ENCODE measurements at regions of chr19 and their contacts with region 1.

Region 1: GRCh38 chr19:12139885-12140547 is at the start of gene ZNF20:
- DNase-seq: peak; percentile 95 to 97
- ATAC-seq: peak; percentile 98 to 100 (median 99)
- H3K4me3 ChIP-seq: peak within 1 kb of the TSS; percentile 57 to 97 (median 76)
- H3K27ac ChIP-seq: peak within 1 kb of the TSS; percentile 44 to 89 (median 78)
- H3K4me1 ChIP-seq: peaks cover 0 to 25% (median 20%) of the 10 kb centered on the region in 9 donors
- H3K27me3 ChIP-seq: no peaks in the 10 kb centered on the region
- CTCF ChIP-seq: peak in 1 of 9 donors; percentile 10
- total RNA-seq, gene ZNF20: 0.37 to 1.1 (median 0.95) TPM in 8 of 10 donors, not detected in the others

Region 2: GRCh38 chr19:11881151-11881800 is 258.7 kb before region 1 on chr19:
- intact Hi-C with region 1: loop called (anchors 1 to 10 kb)
- DNase-seq: peak; percentile 11 to 53
- ATAC-seq: peak; percentile 64 to 86 (median 72)
- H3K4me3 ChIP-seq: no peak overlapping the region
- H3K27ac ChIP-seq: no peak overlapping the region
- H3K4me1 ChIP-seq: peaks cover 0 to 5% (median 0%) of the 10 kb centered on the region in 9 donors
- H3K27me3 ChIP-seq: no peaks in the 10 kb centered on the region
- CTCF ChIP-seq: peak; percentile 41 to 80 (median 72)

Region 3: GRCh38 chr19:11924886-11925650 is 214.9 kb before region 1 on chr19 and contains the start of gene ZNF700:
- intact Hi-C with region 1: loop called in 4 of 10 experiments (anchors 5 kb)
- DNase-seq: peak; percentile 91 to 97
- ATAC-seq: peak; percentile 97 to 99 (median 98)
- H3K4me3 ChIP-seq: peak within 1 kb of the TSS; percentile 68 to 99 (median 91)
- H3K27ac ChIP-seq: peak within 1 kb of the TSS; percentile 84 to 98 (median 93)
- H3K4me1 ChIP-seq: peaks cover 0 to 33% (median 19%) of the 10 kb centered on the region in 9 donors
- H3K27me3 ChIP-seq: no peaks in the 10 kb centered on the region
- CTCF ChIP-seq: no peak
- total RNA-seq, gene ZNF700: 2.8 to 5.0 (median 4.4) TPM

Region 4: DNA sequence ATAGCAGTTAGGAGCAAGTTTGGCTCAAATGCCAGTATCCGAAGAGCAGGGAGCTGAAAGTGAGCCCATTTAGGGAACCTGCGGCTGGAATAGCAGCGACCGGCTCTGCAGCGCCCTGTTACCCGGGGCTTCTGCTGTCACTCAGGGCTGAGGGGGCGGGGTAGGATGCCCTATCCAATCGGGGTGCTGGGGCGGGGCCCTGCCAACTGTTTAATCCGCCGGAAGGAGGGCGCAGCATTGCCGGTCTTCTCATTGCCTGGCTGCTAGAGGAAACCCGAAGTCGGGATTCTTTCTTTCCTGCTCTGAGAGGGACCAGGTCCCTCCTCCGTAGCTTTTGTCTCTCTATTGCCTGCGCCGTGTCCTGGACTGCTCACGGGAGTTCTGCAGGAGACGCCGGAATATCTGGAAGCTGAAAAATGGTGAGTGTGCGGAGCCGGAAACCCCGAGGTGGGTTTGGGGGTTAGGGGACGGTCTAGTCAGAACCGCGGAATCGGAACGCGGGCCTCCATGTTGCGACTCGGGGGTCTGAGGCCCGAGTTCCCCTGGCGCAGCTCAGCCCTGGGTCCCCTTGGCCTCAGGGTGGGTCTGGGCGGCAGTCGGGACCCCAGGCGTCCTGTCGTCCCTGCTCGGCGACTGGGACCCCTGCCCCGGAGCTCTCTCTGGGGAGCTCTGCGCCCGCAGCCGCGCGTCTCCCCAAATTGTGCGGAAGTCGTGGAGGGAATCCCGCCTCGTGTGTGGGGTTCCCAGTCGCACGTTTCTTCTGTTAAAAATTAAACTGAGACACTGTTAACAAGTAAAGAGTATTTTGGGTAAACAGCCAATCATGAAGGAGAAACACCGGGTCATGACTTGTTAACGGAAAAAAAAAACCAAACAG is 152.4 kb before region 1 on chr19:
- intact Hi-C with region 1: loop called in 4 of 10 experiments (anchors 2 to 5 kb)
- DNase-seq: peak; percentile 96
- ATAC-seq: peak; percentile 98 to 100 (median 100)
- H3K4me3 ChIP-seq: peak overlapping the region; percentile 72 to 98 (median 84)
- H3K27ac ChIP-seq: peak overlapping the region; percentile 12 to 90 (median 87)
- H3K4me1 ChIP-seq: peaks cover 0 to 12% (median 0%) of the 10 kb centered on the region in 9 donors
- H3K27me3 ChIP-seq: no peaks in the 10 kb centered on the region
- CTCF ChIP-seq: peak in 1 of 9 donors; percentile 8

Region 5: DNA sequence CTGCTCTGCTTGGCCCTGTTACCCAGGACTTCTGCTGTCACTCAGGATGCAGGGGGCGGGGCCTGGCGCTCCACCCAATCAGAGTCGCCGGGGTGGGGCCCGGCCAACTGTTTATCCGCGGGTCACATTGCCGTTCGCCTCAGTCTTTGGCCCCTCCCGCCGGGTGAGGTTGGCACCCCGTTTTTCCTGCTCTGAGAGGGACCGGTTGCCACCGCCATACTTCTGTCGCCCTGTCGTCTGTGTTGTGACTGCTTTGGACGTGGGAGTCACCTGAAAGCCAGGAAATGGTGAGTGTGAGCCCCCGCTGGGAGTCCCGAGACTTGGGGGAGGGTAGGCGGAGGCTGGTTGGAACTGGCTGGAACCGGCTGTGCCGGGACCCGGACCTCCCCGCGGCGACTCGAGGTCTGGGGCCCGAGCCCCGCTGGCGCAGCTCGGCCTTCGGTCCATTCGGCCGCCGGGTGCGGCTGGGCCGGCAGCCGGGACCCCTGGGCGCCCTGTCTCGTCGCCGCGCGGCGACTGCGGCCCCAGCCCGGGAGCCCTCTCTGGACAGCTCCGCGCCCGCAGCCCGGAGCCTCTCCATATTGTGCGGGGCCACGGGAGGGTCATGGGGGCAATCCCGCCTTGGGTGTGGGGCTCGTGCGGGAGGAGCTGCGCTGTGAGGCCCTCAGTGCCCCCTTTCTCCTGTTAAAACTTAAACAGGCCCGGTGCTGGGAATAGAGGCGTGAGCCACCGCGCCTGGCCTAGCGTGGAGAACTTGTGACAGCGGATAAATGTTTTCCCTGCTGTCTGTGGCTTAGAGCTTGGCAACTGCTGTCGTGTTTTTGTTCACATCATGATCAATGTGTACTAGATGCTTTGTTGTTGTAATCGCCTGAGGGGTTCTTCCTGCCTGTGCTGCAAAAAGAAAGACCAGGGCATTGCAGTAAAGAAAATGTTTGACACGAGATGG is 75.2 kb before region 1 on chr19 and contains the start of gene ZNF844:
- intact Hi-C with region 1: loop called in 5 of 10 experiments (anchors 1 to 5 kb)
- DNase-seq: peak; percentile 98
- ATAC-seq: peak; percentile 99 to 100 (median 100)
- H3K4me3 ChIP-seq: peak within 1 kb of the TSS; percentile 68 to 98 (median 82)
- H3K27ac ChIP-seq: peak within 1 kb of the TSS; percentile 80 to 98 (median 96)
- H3K4me1 ChIP-seq: peaks cover 3 to 30% (median 18%) of the 10 kb centered on the region in 9 donors
- H3K27me3 ChIP-seq: no peaks in the 10 kb centered on the region
- CTCF ChIP-seq: no peak
- total RNA-seq, gene ZNF844: 11.4 to 22.5 (median 17.8) TPM

Region 6: GRCh38 chr19:12180377-12180776 is 40.4 kb after region 1 on chr19:
- intact Hi-C with region 1: no loop called
- DNase-seq: no peak
- ATAC-seq: no peak
- H3K4me3 ChIP-seq: no peak overlapping the region
- H3K27ac ChIP-seq: no peak overlapping the region
- H3K4me1 ChIP-seq: no peaks in the 10 kb centered on the region
- H3K27me3 ChIP-seq: no peaks in the 10 kb centered on the region
- CTCF ChIP-seq: no peak

Region 7: DNA sequence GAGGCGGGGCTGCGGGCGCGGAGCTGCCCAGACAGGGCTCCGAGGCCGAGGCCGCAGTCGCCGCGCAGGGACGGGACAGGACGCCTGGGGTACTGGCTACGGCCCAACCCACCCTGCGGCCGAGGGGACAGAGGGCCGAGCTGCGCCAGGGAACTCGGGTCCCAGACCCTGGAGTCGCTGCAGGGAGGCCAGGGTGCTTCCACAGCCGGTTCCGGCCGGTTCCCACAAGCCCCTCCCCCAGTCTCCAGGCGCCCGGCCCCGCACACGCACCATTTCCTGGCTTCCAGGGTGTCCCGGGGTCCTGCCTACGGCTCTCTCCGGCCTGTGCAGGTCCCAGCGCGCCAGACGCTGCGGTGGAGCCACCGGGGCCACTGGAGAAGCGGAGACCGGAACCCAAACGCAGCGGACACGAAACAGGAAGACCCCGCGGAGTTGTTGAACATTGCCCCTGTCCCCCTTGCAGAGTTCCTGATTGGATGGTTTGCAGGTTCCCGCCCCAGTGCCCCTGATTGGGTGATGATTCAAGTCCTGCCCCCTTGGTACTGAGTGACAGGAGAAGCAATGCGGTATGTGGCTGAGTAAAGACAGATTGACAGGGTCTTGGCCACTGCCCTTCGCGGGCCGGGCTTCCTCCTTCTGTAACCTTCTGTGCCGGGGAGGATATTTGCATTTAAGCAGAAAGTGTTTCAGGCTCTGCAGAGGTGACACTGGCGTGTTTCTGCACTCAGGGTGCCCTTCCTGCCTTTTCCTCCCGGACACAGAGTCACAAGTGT is 411.2 kb after region 1 on chr19 and contains the start of gene ZNF564:
- intact Hi-C with region 1: loop called in 1 of 10 experiments (anchors 5 kb)
- DNase-seq: peak; percentile 89 to 98
- ATAC-seq: peak; percentile 97 to 99 (median 98)
- H3K4me3 ChIP-seq: peak within 1 kb of the TSS; percentile 68 to 95 (median 79)
- H3K27ac ChIP-seq: peak within 1 kb of the TSS; percentile 94 to 98 (median 95)
- H3K4me1 ChIP-seq: peaks cover 3 to 55% (median 37%) of the 10 kb centered on the region in 9 donors
- H3K27me3 ChIP-seq: peaks cover 0 to 5% (median 0%) of the 10 kb centered on the region in 7 donors
- CTCF ChIP-seq: no peak
- total RNA-seq, gene ZNF564: 5.9 to 11.2 (median 9.5) TPM

Measured in heart right ventricle (tissue), 16 donors.